ENCODE measurements at regions of chr12 and their contacts with region 1.

Region 1: DNA sequence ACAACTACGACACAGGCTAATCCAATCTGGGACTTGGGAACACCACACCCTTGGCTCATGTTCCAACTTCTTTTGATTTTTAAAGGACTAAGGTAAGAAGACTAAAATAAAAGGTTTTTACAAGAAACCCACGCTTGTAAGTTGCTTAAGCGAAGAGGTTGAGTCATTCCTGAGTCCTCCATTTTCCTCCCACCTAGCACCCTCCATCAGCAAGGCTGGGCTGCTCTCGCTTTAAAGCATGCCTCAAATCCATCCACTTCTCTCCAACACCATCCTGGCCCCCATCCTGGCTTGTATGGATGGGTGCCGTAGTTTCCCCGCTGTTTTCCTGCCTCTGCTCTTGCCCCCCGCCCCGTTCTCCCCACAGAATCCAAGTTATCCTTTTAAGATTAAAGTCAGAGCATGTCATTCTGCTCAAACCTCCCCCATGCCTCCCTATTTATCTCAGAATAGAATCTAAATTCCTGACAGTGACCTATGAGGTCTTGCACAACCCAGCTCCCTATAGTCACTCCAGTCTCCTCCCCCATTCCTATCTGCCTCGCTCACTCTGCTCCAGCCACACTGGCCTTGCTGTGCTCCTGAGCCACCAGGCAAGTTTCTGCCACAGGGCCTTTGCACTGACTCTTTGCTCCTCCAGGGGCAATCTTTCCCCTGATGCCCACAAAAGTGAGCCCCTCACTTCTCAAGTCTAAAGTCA is 34.5 kb downstream of the SCARB1 start:
- DNase-seq: peak; percentile 86 to 93
- H3K4me3 ChIP-seq: no peak overlapping the region
- H3K4me3 Mint-ChIP-seq: peak overlapping the region; percentile 64
- H3K27ac Mint-ChIP-seq: peak overlapping the region; percentile 91
- H3K4me1 ChIP-seq: peaks cover 58% of the 10 kb centered on the region
- H3K4me1 Mint-ChIP-seq: peaks cover 41% of the 10 kb centered on the region
- H3K27me3 ChIP-seq: no peaks in the 10 kb centered on the region
- H3K27me3 Mint-ChIP-seq: no peaks in the 10 kb centered on the region
- CTCF ChIP-seq: no peak

Region 2: DNA sequence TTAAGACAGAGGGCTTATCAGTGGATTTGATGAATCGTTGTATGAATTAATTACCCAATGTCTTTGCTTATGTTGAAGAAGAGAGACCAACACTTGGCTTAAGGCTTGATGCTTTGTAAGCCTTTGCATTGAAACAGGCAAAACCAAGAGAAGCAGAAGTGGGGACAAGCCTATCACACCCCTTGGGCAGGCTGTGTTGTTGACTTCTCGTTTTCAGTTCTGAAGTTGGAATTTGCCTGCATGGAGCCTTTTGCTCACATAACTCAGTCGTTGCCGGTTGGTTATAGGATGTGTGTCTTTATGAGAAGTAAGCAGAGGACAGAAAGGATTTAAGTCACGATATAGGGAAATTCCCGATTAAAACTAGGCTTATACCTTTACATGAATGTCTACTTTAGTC is 951.2 kb before region 1 on chr12:
- CTCF ChIA-PET with region 1: no interaction called
- POLR2A ChIA-PET with region 1: no interaction called
- intact Hi-C with region 1: no loop called
- DNase-seq: no peak
- H3K4me3 ChIP-seq: no peak overlapping the region
- H3K4me3 Mint-ChIP-seq: no peak overlapping the region
- H3K27ac Mint-ChIP-seq: no peak overlapping the region
- H3K4me1 ChIP-seq: no peaks in the 10 kb centered on the region
- H3K4me1 Mint-ChIP-seq: no peaks in the 10 kb centered on the region
- H3K27me3 ChIP-seq: no peaks in the 10 kb centered on the region
- H3K27me3 Mint-ChIP-seq: peaks cover 4% of the 10 kb centered on the region
- CTCF ChIP-seq: no peak

Region 3: DNA sequence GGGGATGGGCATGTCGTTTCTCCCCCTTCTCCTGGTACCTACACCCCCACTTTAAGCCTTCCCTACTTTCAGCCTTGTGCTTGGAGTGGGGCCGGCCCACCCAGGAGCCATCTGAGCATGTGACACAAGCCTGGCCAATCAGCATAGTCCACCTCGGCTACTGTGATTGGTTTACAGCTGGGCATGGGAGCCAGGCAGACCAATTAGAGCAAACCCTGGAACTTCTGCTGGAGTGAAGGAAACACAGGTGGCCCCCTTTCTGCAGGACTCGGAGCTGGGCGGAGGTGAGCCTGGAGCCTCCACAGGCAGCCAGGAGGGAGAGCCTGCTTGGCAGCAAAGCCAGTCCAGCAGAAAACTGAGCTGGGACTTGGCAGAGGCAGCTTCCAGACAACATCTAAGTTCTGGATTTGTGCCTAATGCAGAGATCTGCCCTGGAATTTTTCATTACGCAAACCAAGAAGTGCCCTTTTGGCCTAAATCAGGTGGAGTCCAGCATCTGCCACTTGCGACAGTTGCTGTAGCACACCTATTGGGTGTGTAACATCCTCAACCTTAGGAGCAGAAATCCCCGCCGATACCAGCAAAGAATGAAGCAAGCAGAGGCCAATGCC is 25.0 kb before region 1 on chr12:
- CTCF ChIA-PET with region 1: no interaction called
- POLR2A ChIA-PET with region 1: no interaction called
- intact Hi-C with region 1: no loop called
- DNase-seq: peak; percentile 66 to 73
- H3K4me3 ChIP-seq: no peak overlapping the region
- H3K4me3 Mint-ChIP-seq: no peak overlapping the region
- H3K27ac Mint-ChIP-seq: peak overlapping the region; percentile 61
- H3K4me1 ChIP-seq: peaks cover 6% of the 10 kb centered on the region; the same call in 1 of the 2 replicates
- H3K4me1 Mint-ChIP-seq: no peaks in the 10 kb centered on the region
- H3K27me3 ChIP-seq: no peaks in the 10 kb centered on the region
- H3K27me3 Mint-ChIP-seq: no peaks in the 10 kb centered on the region
- CTCF ChIP-seq: no peak

Region 4: DNA sequence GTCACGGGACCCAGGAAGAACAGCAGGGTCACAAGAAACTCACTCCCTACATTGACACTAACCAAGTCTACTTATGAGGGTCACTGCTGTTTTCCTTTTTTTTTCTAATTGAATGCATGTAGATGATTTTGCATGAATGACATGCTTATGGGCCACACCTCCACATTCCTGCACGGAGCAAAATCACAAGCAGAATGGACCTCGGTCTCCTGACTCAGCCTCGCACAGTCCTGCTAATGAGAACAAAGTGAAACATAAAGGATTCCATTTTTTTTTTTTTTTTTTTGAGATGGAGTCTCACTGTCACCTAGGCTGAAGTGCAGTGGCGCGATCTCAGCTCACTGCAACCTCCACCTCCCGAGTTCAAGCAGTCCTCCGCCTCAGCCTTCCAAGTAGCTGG is 22.2 kb after region 1 on chr12:
- CTCF ChIA-PET with region 1: no interaction called
- POLR2A ChIA-PET with region 1: no interaction called
- intact Hi-C with region 1: loop called (anchors 1 kb)
- DNase-seq: peak; percentile 44 to 70
- H3K4me3 ChIP-seq: no peak overlapping the region
- H3K4me3 Mint-ChIP-seq: peak overlapping the region; percentile 31
- H3K27ac Mint-ChIP-seq: peak overlapping the region; percentile 55
- H3K4me1 ChIP-seq: peaks cover 29% of the 10 kb centered on the region
- H3K4me1 Mint-ChIP-seq: peaks cover 41% of the 10 kb centered on the region
- H3K27me3 ChIP-seq: no peaks in the 10 kb centered on the region
- H3K27me3 Mint-ChIP-seq: no peaks in the 10 kb centered on the region
- CTCF ChIP-seq: no peak

Region 5: GRCh38 chr12:124863416-124864325 is 34.5 kb after region 1 on chr12 and contains the start of gene SCARB1:
- CTCF ChIA-PET with region 1: no interaction called
- POLR2A ChIA-PET with region 1: interaction called, 3 read pairs
- intact Hi-C with region 1: loop called (anchors 1 kb)
- DNase-seq: peak; percentile 86 to 92
- H3K4me3 ChIP-seq: peak within 1 kb of the TSS; percentile 94
- H3K4me3 Mint-ChIP-seq: peak within 1 kb of the TSS; percentile 95
- H3K27ac Mint-ChIP-seq: peak within 1 kb of the TSS; percentile 89
- H3K4me1 ChIP-seq: peaks cover 17% of the 10 kb centered on the region
- H3K4me1 Mint-ChIP-seq: peaks cover 38% of the 10 kb centered on the region
- H3K27me3 ChIP-seq: no peaks in the 10 kb centered on the region
- H3K27me3 Mint-ChIP-seq: no peaks in the 10 kb centered on the region
- CTCF ChIP-seq: peak; percentile 15 to 36
- total RNA-seq, gene SCARB1: 104 and 106 TPM in 2 replicates

Region 6: DNA sequence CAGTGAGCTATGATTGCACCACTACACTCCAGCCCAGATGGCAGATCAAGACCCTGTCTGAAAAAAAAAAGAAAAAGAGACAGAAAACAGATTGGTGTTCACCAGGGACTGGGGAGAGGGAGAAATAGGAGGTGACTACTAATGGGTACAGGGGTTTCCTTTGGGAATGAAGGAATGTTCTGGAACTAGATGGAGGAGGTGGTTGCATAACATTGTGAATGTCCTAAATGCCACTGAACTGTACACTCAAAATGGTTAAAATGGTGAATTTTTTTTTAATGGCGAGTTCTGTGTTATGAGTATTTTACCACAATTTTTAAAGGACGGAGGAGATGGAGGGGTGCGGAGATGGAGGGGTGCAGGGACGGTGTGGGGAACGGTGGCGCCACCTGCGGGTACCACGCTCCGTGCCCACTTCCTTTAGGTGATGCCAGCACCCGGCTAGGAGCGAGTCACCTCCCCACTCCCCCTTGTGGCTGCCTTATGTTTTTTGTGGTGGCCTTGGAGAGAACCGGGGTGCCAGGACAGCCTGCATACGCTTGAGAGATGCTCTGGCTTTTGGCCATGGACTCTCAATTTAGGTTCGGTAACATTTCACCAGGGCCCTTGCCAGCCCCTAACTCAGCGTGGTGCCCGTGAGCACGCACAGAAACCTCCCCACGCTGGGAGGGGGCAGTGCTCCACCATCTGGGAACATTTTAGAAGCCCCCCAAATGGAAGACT is 69.2 kb after region 1 on chr12:
- CTCF ChIA-PET with region 1: no interaction called
- POLR2A ChIA-PET with region 1: interaction called, 3 read pairs
- intact Hi-C with region 1: loop called (anchors 1 kb)
- DNase-seq: peak; percentile 56 to 63
- H3K4me3 ChIP-seq: no peak overlapping the region
- H3K4me3 Mint-ChIP-seq: no peak overlapping the region
- H3K27ac Mint-ChIP-seq: peak overlapping the region; percentile 32
- H3K4me1 ChIP-seq: peaks cover 26% of the 10 kb centered on the region
- H3K4me1 Mint-ChIP-seq: peaks cover 18% of the 10 kb centered on the region
- H3K27me3 ChIP-seq: no peaks in the 10 kb centered on the region
- H3K27me3 Mint-ChIP-seq: no peaks in the 10 kb centered on the region
- CTCF ChIP-seq: peak; percentile 50 to 55

Region 7: DNA sequence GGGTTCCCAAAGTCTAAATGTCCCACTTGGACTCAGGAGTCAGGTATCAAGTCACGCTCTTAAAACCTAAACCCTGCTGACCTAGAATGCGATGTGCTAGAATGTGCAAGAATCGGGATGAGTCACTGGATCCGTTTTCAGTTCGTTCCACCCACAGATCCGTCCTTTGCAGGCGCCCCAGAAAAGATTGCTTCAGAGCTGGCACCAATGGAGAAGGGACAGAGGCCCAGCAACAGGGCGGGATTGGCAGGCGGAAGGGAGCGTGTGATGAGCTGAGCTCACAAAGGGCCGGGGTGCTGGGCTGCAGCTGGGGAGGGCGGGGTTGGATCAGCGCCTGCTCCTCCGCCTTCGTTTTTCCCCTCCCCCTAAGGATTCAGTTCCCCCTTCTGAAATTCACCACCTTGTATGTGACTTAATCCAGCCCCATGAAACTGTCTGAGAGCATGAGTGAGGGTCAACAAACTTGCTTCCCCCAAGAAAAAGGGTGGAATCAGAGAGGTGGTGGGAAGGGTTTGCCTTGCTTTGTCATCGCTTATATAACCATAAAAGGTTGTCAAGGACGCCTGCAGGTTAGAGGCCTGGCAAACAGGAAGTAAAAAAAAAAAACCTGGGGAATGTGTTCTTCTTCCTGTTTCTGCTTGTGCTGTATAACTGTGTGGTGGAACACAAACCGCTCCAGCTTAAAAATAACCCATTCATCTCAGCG is 88.1 kb after region 1 on chr12:
- CTCF ChIA-PET with region 1: no interaction called
- POLR2A ChIA-PET with region 1: interaction called, 11 read pairs
- intact Hi-C with region 1: no loop called
- DNase-seq: peak; percentile 97 to 99
- H3K4me3 ChIP-seq: peak overlapping the region; percentile 31
- H3K4me3 Mint-ChIP-seq: peak overlapping the region; percentile 98
- H3K27ac Mint-ChIP-seq: peak overlapping the region; percentile 100
- H3K4me1 ChIP-seq: peaks cover 42% of the 10 kb centered on the region
- H3K4me1 Mint-ChIP-seq: peaks cover 49% of the 10 kb centered on the region
- H3K27me3 ChIP-seq: no peaks in the 10 kb centered on the region
- H3K27me3 Mint-ChIP-seq: peaks cover 9% of the 10 kb centered on the region
- CTCF ChIP-seq: no peak

Measured in Caco-2 (cell line).